PC-9 (cell line): ENCODE measurements at regions of chr3 and their contacts with region 1.

Region 1: DNA sequence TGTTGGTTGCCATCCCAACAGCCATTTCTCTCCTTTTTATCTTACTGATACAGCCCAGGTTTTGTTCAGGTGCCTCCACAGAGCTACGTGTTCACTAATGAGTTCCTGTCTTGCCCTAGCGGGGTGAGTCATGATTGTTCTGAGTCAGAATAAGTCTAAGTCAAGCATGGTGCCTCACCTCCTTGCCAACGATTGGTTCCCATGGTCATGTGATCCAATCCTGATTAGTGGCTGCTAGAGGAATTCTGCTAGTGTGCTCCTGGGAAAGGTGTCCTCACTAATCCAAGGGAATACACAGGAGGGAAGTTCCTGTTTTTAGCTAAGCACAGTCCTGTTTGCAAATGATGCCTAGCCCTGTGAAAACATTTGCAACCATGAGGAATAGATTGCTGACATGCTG is 99.8 kb downstream of the NSUN3 start:
- DNase-seq: peak; percentile 13 to 72
- H3K4me3 ChIP-seq: no peak overlapping the region
- H3K27ac ChIP-seq: no peak overlapping the region
- H3K4me1 ChIP-seq: no peaks in the 10 kb centered on the region
- H3K27me3 ChIP-seq: no peaks in the 10 kb centered on the region
- CTCF ChIP-seq: no peak

Region 2: DNA sequence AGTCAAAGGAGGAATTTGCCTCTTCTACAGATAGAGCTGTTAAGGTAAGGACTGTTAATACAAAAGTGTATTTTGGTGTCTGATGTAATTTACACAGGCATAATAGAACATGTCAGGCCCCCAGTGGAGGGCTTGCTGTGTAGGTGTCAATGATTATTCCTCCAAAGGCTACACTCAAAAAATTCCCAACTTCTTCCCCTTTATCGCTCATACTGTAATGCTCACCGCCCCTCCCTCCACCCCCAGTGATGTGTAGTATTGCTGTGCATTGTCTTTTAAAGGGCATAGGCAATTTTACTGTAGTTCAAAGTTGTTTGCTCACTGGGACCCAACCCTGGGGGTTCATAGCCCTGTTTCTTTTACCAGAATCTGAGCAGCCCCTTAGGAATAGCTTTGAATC is 67.6 kb before region 1 on chr3:
- CTCF ChIA-PET with region 1: interaction called, 10 read pairs
- POLR2A ChIA-PET with region 1: no interaction called
- intact Hi-C with region 1: no loop called
- DNase-seq: peak in 1 of 2 experiments; percentile 21
- H3K4me3 ChIP-seq: no peak overlapping the region
- H3K27ac ChIP-seq: no peak overlapping the region
- H3K4me1 ChIP-seq: no peaks in the 10 kb centered on the region
- H3K27me3 ChIP-seq: no peaks in the 10 kb centered on the region
- CTCF ChIP-seq: no peak

Region 3: DNA sequence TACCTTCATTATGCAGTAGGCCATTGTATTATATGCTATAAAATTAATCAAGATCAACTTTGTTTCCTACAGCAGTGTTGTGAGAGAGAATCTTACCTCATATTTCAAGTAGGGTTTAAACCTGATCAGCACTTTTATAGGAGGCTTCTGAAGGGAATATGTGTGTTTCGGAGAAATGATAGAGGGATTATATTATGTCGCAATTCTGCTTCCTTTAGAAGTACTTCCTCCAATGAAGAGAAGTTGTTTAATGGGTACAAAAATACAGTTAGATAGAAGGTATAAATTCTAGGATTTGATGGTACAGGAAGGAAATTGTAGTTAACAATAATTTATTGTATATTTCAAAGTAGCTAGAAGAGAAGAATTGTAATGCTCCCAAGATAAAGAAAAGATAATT is 45.0 kb before region 1 on chr3:
- CTCF ChIA-PET with region 1: no interaction called
- POLR2A ChIA-PET with region 1: no interaction called
- intact Hi-C with region 1: no loop called
- DNase-seq: no peak
- H3K4me3 ChIP-seq: no peak overlapping the region
- H3K27ac ChIP-seq: no peak overlapping the region
- H3K4me1 ChIP-seq: no peaks in the 10 kb centered on the region
- H3K27me3 ChIP-seq: no peaks in the 10 kb centered on the region
- CTCF ChIP-seq: no peak